ENCODE measurements at regions of chr15 and their contacts with region 1.

Region 1: DNA sequence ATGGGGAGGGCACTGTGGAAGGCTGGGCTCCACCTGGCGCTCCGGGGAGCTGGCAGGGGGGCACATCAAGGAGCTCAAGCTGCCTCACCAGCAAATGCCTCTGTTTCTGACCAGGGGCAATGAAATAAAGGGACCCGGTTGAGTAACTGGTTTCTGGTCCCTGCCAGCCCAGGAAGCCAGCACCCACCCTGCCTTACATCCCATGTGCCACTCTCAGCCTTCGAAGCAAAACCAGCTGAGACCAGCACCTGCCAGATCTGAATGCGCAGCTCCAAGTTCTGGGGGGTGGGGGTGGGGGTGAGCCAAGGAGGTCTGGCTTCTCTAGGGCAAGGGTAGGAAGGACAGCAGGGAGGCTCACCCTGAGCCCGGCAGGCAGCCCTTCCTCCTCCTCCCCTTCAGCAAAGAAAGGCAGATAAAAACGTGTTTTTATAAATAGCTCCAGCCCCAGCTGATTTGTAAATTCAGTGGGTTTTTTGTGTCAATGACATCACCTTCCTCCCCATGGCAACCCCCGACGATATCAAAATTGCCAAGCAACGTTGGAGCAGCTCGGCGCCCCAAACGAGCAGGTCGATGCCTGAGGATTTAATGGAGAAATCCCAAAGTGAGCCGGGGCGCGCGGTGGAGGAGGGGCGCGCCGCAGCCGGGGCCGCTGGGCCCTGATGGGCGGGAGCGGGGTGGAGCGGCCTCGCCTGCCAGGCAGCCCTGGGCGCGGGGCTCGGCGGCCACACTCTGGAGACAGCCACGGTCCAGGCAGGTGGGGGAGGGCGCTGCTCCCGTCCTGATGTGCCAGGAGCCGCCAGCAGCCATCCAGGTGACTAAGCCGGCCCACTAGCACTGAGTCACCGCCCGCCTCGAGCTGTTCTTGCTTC is at the start of gene PAK6:
- DNase-seq: peak; percentile 60 to 90
- H3K4me3 ChIP-seq: peak within 1 kb of the TSS; percentile 14 to 54 (median 30); a peak in 7 of 8 replicates
- H3K27ac ChIP-seq: no peak within 1 kb of the TSS
- H3K4me1 ChIP-seq: peaks cover 9 to 18% (median 14%) of the 10 kb centered on the region in 4 experiments
- H3K27me3 ChIP-seq: peaks cover 0 to 6% (median 2%) of the 10 kb centered on the region in 4 experiments; a peak in 2 of 7 replicates
- CTCF ChIP-seq: peak in 1 of 3 experiments; percentile 4; a peak in 1 of 4 replicates
- EP300 ChIP-seq: no peak
- POLR2A ChIP-seq: peak in 1 of 2 experiments; percentile 64; a peak in 2 of 3 replicates
- RAD21 ChIP-seq: no peak
- total RNA-seq, gene PAK6: 9.0 and 9.4 TPM in 2 replicates

Region 2: DNA sequence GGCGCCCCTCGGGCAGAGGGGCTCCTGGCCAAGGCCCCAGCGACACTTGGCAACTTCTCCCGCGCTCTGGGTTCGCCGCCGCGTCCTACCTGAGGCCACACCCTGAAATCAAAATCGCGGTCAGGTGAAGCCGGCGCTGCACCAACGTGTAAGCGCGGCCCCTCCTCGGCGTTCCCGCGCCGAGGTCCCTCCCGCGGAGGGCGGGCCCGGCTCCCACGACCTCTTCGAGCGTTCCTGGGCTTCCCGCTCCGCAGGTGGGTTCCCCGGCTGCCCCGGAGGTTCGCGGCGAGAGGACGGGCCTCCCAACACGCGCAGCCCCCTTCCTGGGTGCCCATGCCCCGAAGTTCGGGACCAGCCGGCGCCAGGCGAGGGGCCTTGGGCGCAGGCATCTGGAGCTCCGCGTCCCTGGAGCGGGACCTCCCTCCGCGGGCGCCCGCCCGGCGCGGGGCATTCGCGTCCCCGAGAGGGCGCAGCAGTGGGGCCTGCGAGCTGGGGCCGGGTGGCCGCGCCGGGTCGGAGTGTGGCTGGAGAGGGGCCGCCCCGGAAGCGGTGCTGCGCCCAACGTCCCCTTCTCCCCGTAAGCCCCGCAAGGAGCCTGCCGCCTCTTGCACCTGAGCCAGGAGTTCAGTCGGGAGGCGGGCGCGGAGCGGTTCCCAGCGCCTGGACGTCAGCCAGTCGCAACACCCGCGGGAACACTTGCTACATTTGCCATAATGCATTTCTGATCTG is 13.8 kb after region 1 on chr15:
- CTCF ChIA-PET with region 1: interaction called, 1,340 read pairs
- POLR2A ChIA-PET with region 1: interaction called, 47 read pairs
- DNase-seq: peak in 1 of 2 experiments; percentile 76
- H3K4me3 ChIP-seq: peak overlapping the region; percentile 50 to 71 (median 54)
- H3K27ac ChIP-seq: no peak overlapping the region
- H3K4me1 ChIP-seq: peaks cover 0 to 10% (median 7%) of the 10 kb centered on the region in 4 experiments; a peak in 5 of 7 replicates
- H3K27me3 ChIP-seq: peaks cover 11 to 41% (median 32%) of the 10 kb centered on the region in 4 experiments
- CTCF ChIP-seq: no peak
- EP300 ChIP-seq: no peak
- POLR2A ChIP-seq: peak in 1 of 2 experiments; percentile 30; a peak in 1 of 3 replicates
- RAD21 ChIP-seq: no peak

Region 3: DNA sequence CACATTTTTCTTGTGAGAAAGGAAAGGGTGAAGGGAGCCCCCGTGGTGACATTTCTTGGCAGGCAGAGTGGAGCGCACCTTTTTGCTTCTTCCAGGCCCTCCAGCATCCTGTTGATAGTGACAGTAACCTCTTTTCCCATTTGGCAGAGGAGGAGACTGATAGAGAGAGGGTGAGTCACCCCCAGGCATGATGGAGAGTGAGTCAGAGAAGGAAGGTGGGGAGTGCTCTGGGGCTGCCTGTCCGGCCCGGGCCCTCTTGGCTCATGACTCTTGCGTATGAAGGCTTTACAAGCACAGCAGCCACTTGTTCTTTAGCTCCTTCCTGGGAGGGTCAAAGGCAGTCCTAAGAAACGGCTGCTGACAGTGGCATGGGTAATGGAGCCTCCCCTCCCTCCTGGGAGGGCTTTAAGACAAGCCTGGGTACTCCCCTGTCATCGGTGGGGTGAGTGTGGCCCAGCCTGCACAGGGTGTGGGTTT is 28.1 kb after region 1 on chr15:
- CTCF ChIA-PET with region 1: interaction called, 1,340 read pairs
- POLR2A ChIA-PET with region 1: interaction called, 13 read pairs
- DNase-seq: no peak
- H3K4me3 ChIP-seq: no peak overlapping the region
- H3K27ac ChIP-seq: no peak overlapping the region
- H3K4me1 ChIP-seq: peaks cover 0 to 4% (median under 1%) of the 10 kb centered on the region in 4 experiments; a peak in 4 of 7 replicates
- H3K27me3 ChIP-seq: no peaks in the 10 kb centered on the region
- CTCF ChIP-seq: no peak
- EP300 ChIP-seq: no peak
- POLR2A ChIP-seq: no peak
- RAD21 ChIP-seq: no peak